ENCODE measurements at regions of chr15 and their contacts with region 1.

Region 1: DNA sequence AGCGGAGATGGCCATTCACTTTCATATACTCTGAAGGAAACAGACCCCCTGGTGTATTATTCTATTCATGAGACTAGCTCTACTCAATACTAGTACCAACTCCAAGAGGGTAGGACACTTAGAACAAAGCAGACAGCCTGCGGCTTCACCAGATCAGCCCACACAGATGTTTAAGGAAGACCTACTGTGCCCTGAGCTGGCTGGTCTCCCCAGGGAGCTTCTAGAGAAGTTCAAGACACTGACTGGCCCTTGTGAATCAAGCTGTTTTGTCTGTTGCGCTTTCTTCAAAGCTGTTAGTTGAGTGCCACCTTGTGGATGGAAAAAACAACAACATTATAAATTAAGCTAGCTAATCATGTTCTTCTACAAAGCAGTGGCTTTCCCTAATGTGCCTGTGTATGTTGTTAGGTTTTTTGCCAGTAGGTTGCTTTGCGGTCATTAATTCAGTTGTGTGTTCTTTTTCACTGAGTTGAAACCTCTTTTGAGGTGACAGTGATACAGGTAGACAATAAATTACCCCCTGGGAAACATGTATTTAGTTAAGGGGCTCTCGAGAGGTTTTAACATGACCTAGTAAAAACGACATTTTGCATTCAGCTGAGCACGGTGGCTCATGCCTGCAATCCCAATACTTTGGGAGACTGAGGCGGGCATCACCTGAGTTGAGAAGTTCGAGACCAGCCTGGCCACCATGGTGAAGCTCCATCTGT is 64.2 kb upstream of the MYZAP start:
- DNase-seq: no peak

Region 2: DNA sequence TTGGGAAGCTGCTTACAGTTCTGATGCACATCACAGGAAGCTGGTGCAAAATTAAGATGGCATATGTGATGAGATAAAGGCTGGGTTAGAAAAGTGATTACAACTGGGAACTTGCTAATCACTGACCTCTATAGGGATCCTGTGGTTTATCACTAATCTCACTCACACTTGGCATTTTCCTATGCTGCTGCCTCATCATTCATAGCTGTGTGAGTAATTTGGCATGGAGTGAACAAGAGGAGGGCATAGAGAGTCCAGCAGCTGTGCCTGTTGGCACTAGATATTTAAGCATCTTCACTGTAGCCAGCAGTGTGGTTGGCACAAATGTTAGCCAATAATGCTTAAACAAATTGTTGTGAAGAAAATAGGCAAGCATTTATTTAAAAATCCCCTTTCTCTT is 368.9 kb before region 1 on chr15:
- intact Hi-C with region 1: loop called (anchors 10 kb)
- DNase-seq: no peak

Region 3: GRCh38 chr15:57340682-57341259 is 186.8 kb before region 1 on chr15:
- intact Hi-C with region 1: loop called (anchors 1 kb)
- DNase-seq: no peak

Region 4: DNA sequence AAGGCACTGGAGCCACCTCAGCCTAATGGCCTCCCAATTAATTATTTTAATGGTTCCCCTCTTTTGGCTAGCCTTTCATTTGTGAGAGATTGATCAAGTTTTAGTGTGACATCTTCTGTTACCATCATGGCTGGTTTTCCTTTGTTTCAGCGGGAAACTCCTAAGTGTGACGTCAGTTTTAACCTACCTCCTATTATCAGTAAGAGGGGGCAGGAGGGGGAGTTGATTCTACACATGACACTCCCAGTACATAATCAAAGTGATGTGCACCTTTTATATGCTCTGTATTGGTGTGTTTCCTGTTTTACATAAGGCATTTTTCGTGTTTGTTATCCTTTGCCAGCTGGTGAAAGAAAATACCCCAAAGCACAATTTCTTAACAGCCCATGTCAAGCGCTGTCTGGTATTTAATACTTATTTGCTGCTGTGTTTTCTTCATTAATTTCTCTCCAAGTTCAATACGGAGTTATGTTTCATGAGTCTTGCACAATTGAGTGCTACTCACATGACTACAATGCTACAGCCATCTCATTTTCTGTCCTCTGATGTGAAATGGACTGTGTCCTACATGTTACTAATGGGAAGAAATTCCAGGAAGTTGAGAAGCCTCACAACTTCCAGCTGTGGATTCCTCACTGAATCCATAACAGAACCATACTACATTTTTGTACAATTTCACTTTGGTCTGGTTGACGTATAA is 126.8 kb after region 1 on chr15:
- intact Hi-C with region 1: no loop called
- DNase-seq: no peak